A673 (cell line): ENCODE measurements at regions of chr1 and their contacts with region 1.

Region 1: DNA sequence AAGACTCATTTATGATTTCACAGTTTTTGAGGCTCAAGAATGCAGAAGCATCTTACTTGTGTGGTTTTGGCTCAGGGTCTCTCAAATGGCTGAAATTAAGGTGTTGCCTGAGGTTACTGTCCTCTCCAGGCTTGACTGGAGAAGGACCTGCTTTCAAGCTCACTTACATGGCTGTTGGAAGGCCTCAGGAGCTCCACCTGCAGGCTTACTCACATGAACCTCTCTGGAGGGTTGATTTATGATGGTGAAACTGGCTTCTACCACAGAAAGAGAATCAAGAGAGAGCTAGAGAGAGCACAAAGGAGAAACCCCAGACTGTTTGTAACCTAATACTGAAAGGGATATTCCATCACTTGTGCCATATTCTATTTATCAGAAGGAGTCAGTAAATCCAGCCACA is 6.2 kb upstream of the KCNK2 start:
- DNase-seq: peak; percentile 24
- H3K4me3 ChIP-seq: no peak overlapping the region
- H3K27ac ChIP-seq: no peak overlapping the region
- H3K4me1 ChIP-seq: no peaks in the 10 kb centered on the region
- H3K27me3 ChIP-seq: peaks cover 59% of the 10 kb centered on the region
- CTCF ChIP-seq: peak; percentile 54

Region 2: DNA sequence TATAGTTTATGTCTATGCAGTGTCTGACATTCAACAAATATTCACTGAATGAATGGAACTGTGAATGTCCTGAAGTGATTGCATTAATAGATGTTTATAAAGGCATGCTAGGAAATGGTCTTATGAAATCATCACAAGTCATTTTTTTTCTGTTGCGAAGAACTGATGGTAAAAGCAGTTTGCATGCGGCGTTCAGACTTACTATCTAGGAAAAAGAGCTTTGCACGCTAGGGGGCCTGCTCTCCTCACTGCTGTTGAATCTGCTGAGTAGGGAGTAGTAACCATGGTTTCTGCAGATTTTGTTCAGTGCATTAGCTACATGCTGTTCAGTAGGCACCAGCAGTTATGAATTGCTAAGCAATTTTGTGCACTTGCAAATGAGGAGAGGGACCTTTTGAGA is 415.5 kb before region 1 on chr1:
- CTCF ChIA-PET with region 1: interaction called, 7 read pairs
- POLR2A ChIA-PET with region 1: no interaction called
- intact Hi-C with region 1: loop called (anchors 10 kb)
- DNase-seq: peak; percentile 83
- H3K4me3 ChIP-seq: no peak overlapping the region
- H3K27ac ChIP-seq: no peak overlapping the region
- H3K4me1 ChIP-seq: peaks cover 8% of the 10 kb centered on the region
- H3K27me3 ChIP-seq: no peaks in the 10 kb centered on the region
- CTCF ChIP-seq: peak; percentile 73

Region 3: DNA sequence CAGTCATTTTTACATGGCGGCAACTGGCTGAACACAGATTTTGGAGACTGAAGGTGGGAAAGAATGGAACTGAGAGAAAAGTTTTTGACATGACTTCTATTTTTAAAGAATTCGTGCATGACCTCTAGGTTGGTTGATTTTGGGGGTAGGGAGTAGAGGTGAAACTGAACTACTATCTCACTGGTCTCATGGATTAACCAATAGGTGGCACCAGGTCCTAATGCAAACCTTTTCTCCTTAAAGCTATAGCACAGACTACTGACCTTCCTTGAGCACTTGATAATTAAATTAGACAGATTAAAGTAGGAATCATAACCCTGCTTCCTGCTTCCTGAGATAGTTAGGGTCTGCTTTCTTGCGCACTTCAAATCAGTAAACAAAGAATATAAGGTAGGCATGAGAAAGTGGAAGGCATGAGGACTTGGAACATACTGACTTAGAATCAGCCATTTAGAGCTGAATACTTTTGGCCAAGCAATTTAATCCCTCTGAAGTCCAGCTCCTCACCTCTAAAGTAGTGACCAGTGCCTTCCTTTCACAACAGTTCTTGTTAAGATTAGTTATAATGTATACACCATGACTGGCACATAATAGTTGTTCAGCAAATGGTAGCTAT is 267.4 kb before region 1 on chr1:
- CTCF ChIA-PET with region 1: interaction called, 3 read pairs
- POLR2A ChIA-PET with region 1: no interaction called
- intact Hi-C with region 1: loop called (anchors 5 kb)
- DNase-seq: peak; percentile 33
- H3K4me3 ChIP-seq: no peak overlapping the region
- H3K27ac ChIP-seq: no peak overlapping the region
- H3K4me1 ChIP-seq: no peaks in the 10 kb centered on the region
- H3K27me3 ChIP-seq: peaks cover 25% of the 10 kb centered on the region
- CTCF ChIP-seq: peak; percentile 42

Region 4: DNA sequence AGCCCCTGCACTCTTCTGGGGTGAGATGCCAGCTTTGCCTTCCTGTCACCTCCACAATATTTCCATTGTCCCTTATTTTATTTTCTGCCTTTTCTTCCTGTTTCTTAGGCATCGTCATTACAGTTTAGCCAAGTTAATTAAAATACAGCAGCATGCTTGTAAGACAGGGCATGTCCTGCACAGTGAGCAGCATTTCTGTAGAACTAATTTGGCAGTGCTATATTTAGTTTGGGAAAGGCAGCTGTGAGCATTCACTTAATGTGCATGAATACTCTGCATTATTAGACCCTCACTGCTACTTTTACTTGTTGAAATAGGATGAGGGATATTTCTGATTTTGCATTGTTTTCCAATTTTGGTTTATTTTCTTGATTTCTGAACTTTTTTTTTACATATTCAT is 139.5 kb after region 1 on chr1:
- CTCF ChIA-PET with region 1: no interaction called
- POLR2A ChIA-PET with region 1: no interaction called
- intact Hi-C with region 1: no loop called
- DNase-seq: no peak
- H3K4me3 ChIP-seq: no peak overlapping the region
- H3K27ac ChIP-seq: no peak overlapping the region
- H3K4me1 ChIP-seq: no peaks in the 10 kb centered on the region
- H3K27me3 ChIP-seq: peaks cover 12% of the 10 kb centered on the region
- CTCF ChIP-seq: no peak